Activated CD8-positive, alpha-beta T cell treated with anti-CD3 and anti-CD28 coated beads for 36 hours (primary cell): ENCODE measurements at regions of chr10 and their contacts with region 1.

Region 1: DNA sequence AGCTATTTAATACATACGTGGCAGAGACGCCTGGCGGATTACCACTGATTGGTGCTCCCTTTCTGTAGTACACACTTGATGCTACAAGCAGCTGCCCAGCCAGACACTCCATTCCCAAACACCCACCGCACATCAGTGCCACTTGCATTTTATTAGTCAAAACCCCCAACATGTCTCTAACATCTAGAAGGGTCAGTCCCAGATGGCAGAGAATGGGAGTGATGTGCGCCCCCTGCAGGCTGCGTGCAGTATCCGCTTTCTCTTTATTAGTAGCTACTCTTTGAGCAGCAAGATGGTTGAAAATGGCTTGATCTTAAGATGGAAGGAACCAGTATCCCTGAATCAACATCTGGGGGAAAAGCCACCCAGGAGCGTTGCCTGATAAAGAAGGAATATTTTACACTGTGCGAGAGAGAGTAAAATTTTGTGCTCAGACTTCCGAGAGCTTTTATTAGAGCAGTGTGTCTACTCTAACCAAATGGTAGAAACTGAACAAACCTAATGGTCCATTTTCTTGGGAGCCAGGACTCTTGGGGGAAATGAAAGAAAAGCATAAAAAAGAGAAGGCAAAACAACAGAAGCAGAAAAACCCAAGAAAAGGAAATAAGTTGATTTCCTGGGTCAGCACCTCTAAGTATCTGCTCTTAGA is 78.3 kb downstream of the ST8SIA6 start:
- DNase-seq: peak; percentile 53
- ATAC-seq: peak; percentile 42
- H3K4me3 Mint-ChIP-seq: no peak overlapping the region
- H3K27ac Mint-ChIP-seq: no peak overlapping the region
- H3K4me1 Mint-ChIP-seq: no peaks in the 10 kb centered on the region
- H3K27me3 Mint-ChIP-seq: peaks cover 1% of the 10 kb centered on the region
- CTCF ChIP-seq: peak; percentile 59

Region 2: GRCh38 chr10:17290226-17290625 is 85.8 kb before region 1 on chr10:
- CTCF ChIA-PET with region 1: interaction called, 12 read pairs
- POLR2A ChIA-PET with region 1: no interaction called
- intact Hi-C with region 1: no loop called
- DNase-seq: peak; percentile 35
- ATAC-seq: peak; percentile 97
- H3K4me3 Mint-ChIP-seq: no peak overlapping the region
- H3K27ac Mint-ChIP-seq: peak overlapping the region; percentile 82
- H3K4me1 Mint-ChIP-seq: peaks cover 10% of the 10 kb centered on the region
- H3K27me3 Mint-ChIP-seq: peaks cover 16% of the 10 kb centered on the region
- CTCF ChIP-seq: peak; percentile 39

Region 3: GRCh38 chr10:17309435-17309834 is 66.6 kb before region 1 on chr10:
- CTCF ChIA-PET with region 1: no interaction called
- POLR2A ChIA-PET with region 1: no interaction called
- intact Hi-C with region 1: no loop called
- DNase-seq: no peak
- ATAC-seq: no peak
- H3K4me3 Mint-ChIP-seq: no peak overlapping the region
- H3K27ac Mint-ChIP-seq: no peak overlapping the region
- H3K4me1 Mint-ChIP-seq: no peaks in the 10 kb centered on the region
- H3K27me3 Mint-ChIP-seq: peaks cover 19% of the 10 kb centered on the region
- CTCF ChIP-seq: no peak

Region 4: DNA sequence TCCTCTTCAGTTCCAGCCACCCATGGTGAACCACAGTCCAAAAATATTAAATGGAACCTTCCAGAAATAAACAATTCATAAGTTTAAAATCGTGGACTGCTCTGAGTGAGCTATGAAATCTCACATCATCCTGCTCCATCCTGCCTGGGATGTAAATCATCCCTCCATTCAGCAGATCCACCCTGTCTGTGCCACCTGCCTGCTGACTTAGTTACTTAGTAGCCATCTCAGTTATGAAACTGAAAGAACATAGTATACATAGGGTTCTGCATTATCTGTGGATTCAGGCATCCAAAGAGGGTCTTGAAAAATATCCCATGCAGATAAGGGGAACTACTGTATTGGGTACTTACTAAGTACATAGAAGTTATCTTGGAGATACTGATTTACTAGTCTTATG is 10.7 kb before region 1 on chr10:
- CTCF ChIA-PET with region 1: interaction called, 35 read pairs
- POLR2A ChIA-PET with region 1: no interaction called
- intact Hi-C with region 1: no loop called
- DNase-seq: no peak
- ATAC-seq: no peak
- H3K4me3 Mint-ChIP-seq: no peak overlapping the region
- H3K27ac Mint-ChIP-seq: no peak overlapping the region
- H3K4me1 Mint-ChIP-seq: peaks cover 3% of the 10 kb centered on the region
- H3K27me3 Mint-ChIP-seq: peaks cover 1% of the 10 kb centered on the region
- CTCF ChIP-seq: no peak

Region 5: GRCh38 chr10:17387861-17388508 is 11.9 kb after region 1 on chr10:
- CTCF ChIA-PET with region 1: interaction called, 19 read pairs
- POLR2A ChIA-PET with region 1: no interaction called
- intact Hi-C with region 1: no loop called
- DNase-seq: no peak
- ATAC-seq: no peak
- H3K4me3 Mint-ChIP-seq: no peak overlapping the region
- H3K27ac Mint-ChIP-seq: no peak overlapping the region
- H3K4me1 Mint-ChIP-seq: no peaks in the 10 kb centered on the region
- H3K27me3 Mint-ChIP-seq: no peaks in the 10 kb centered on the region
- CTCF ChIP-seq: no peak